MCF 10A (cell line): ENCODE measurements at regions of chr9 and their contacts with region 1.

Region 1: GRCh38 chr9:92501671-92502393 is 19.5 kb upstream of the ASPN start:
- DNase-seq: peak; percentile 68
- H3K4me3 Mint-ChIP-seq: peak overlapping the region; percentile 8
- H3K27ac Mint-ChIP-seq: peak overlapping the region; percentile 57
- H3K4me1 Mint-ChIP-seq: peaks cover 28% of the 10 kb centered on the region
- H3K27me3 Mint-ChIP-seq: no peaks in the 10 kb centered on the region
- CTCF ChIP-seq: peak; percentile 47

Region 2: DNA sequence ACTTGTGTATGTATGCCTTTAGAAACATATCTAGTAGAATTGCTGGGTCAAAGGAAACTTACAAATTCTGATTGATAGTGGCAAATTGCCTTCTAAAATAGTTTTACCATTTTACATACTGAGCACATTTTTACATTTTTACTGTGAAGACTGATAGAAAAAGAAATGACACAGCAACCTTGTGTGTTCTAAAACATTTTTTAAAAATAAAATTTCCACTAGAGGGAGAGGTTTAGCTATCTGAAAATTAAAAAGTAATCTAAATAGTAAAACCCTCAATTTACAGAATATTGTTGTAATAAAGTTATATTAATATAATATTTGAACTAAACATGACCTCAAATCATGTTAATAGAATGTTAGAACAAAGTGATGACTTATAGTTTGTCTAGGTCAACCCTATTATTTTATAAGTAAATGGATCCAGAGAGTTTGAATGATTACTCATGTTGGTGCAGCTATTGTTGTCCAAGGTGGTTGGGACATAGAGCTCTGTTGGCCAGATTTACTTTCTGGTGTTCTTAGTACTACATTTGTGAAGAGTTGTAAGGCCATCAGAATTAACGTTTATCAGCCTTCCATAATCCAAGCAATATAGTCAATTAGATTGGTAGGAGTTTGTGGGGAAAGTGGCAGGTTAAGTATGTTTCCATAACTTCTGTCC is 158.9 kb before region 1 on chr9:
- CTCF ChIA-PET with region 1: no interaction called
- POLR2A ChIA-PET with region 1: interaction called, 10 read pairs
- intact Hi-C with region 1: loop called (anchors 5 kb)
- DNase-seq: no peak
- H3K4me3 Mint-ChIP-seq: no peak overlapping the region
- H3K27ac Mint-ChIP-seq: peak overlapping the region; percentile 48
- H3K4me1 Mint-ChIP-seq: no peaks in the 10 kb centered on the region
- H3K27me3 Mint-ChIP-seq: no peaks in the 10 kb centered on the region
- CTCF ChIP-seq: peak; percentile 32

Region 3: GRCh38 chr9:92393686-92394085 is 108.1 kb before region 1 on chr9:
- CTCF ChIA-PET with region 1: no interaction called
- POLR2A ChIA-PET with region 1: no interaction called
- intact Hi-C with region 1: no loop called
- DNase-seq: no peak
- H3K4me3 Mint-ChIP-seq: peak overlapping the region; percentile 25
- H3K27ac Mint-ChIP-seq: peak overlapping the region; percentile 59
- H3K4me1 Mint-ChIP-seq: peaks cover 6% of the 10 kb centered on the region
- H3K27me3 Mint-ChIP-seq: no peaks in the 10 kb centered on the region
- CTCF ChIP-seq: no peak

Region 4: GRCh38 chr9:92438900-92439526 is 62.8 kb before region 1 on chr9:
- CTCF ChIA-PET with region 1: interaction called, 4 read pairs
- POLR2A ChIA-PET with region 1: interaction called, 9 read pairs
- intact Hi-C with region 1: loop called (anchors 1 kb)
- DNase-seq: peak; percentile 9
- H3K4me3 Mint-ChIP-seq: no peak overlapping the region
- H3K27ac Mint-ChIP-seq: peak overlapping the region; percentile 68
- H3K4me1 Mint-ChIP-seq: peaks cover 7% of the 10 kb centered on the region
- H3K27me3 Mint-ChIP-seq: no peaks in the 10 kb centered on the region
- CTCF ChIP-seq: peak; percentile 50

Region 5: DNA sequence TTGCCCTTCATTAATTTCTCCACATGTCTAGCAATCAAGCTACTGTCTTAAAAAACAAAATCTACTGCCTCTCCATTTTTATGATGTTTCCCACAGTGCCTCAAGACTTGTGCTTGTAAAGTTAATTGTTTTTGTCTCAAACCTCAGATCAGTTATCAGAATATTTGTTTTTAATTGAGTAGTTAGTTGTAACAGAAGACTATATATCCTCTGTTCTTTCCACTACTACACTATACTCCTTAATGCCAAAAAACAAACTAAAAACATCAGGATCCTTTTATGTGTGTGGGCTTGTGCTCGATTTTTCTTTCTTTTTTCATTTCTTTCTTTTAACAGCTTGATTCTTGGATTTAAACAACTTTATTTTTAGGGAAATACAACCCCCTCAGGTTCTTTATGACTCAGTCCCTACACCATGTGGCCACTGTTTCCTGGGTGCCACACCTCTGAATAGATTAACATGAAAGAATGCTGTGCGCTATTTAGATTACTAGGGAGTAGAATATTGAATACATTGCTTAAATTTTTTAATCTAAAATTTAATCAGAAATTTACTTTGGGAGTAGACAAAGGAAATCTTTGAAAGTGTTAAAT is 20.7 kb before region 1 on chr9:
- CTCF ChIA-PET with region 1: interaction called, 9 read pairs
- POLR2A ChIA-PET with region 1: interaction called, 28 read pairs
- intact Hi-C with region 1: no loop called
- DNase-seq: peak; percentile 59
- H3K4me3 Mint-ChIP-seq: peak overlapping the region; percentile 30
- H3K27ac Mint-ChIP-seq: peak overlapping the region; percentile 97
- H3K4me1 Mint-ChIP-seq: peaks cover 22% of the 10 kb centered on the region
- H3K27me3 Mint-ChIP-seq: no peaks in the 10 kb centered on the region
- CTCF ChIP-seq: no peak

Region 6: DNA sequence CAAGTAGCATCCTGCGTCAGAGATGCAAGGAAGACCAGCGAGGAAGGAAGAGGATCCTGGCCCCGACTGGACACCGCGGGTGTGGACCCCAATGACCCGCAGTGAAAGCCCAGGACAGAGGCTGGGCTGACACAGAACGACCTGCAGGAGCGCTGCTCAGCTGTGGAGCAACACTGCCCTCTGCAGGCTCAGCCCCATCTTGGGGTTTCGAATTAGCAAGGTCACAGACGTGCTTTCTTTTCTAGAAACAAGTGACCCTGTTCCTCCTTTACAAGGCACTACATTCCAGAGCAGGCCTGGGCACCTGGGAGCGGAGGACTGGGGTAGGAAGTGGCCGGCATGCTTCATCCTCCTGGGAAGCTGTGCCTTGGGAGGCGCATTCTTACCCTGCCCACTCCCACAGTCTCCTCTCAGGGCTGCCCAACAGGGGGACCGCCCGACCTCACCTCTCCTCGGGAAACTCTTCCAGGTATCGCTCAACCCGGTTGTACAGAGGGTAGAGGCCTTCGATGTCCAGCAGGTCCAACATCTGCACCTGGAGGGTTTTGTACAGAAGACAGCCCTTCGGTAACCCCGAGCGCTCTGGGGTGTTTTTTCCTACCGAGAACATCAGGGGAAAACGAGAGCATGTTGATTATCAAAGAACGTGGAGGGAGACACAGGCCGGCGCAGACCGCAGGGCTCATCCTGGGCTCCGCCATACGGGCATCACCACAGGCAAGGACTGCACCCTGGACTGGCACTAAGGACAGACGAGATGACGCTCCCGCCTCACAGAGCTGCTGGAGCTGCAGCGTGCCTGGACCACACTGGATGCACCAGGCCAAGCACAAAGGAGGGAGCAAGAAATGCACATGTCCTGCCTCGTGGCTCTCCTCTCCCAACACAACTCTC is 133.1 kb after region 1 on chr9:
- CTCF ChIA-PET with region 1: no interaction called
- POLR2A ChIA-PET with region 1: interaction called, 3 read pairs
- intact Hi-C with region 1: loop called (anchors 1 kb)
- DNase-seq: peak; percentile 67
- H3K4me3 Mint-ChIP-seq: no peak overlapping the region
- H3K27ac Mint-ChIP-seq: no peak overlapping the region
- H3K4me1 Mint-ChIP-seq: no peaks in the 10 kb centered on the region
- H3K27me3 Mint-ChIP-seq: no peaks in the 10 kb centered on the region
- CTCF ChIP-seq: peak; percentile 90

Region 7: DNA sequence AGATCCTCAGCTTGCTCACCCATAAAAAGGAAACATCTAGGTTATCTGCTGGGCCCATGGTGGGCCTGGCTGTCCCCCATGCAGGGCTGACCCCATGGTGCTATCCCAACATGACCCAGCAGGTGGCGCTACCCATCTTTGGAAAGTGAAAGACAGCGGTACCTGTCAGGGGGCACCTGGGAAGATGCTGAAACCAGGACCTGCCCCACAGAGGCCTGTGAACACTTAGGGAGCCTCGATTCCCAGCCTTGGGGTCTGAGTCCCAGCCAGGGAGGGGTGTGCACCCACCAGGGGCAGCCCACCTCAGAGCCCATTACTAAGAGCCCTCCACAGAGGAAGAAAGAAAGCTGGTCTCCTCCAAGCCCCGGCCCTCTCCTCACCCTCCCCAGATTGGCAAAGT is 214.7 kb after region 1 on chr9:
- CTCF ChIA-PET with region 1: no interaction called
- POLR2A ChIA-PET with region 1: no interaction called
- intact Hi-C with region 1: no loop called
- DNase-seq: peak; percentile 64
- H3K4me3 Mint-ChIP-seq: peak overlapping the region; percentile 11
- H3K27ac Mint-ChIP-seq: peak overlapping the region; percentile 77
- H3K4me1 Mint-ChIP-seq: peaks cover 7% of the 10 kb centered on the region
- H3K27me3 Mint-ChIP-seq: no peaks in the 10 kb centered on the region
- CTCF ChIP-seq: peak; percentile 87

Region 8: GRCh38 chr9:92790542-92791527 is 289.0 kb after region 1 on chr9:
- CTCF ChIA-PET with region 1: interaction called, 7 read pairs
- POLR2A ChIA-PET with region 1: no interaction called
- intact Hi-C with region 1: loop called (anchors 10 kb)
- DNase-seq: peak; percentile 81
- H3K4me3 Mint-ChIP-seq: no peak overlapping the region
- H3K27ac Mint-ChIP-seq: no peak overlapping the region
- H3K4me1 Mint-ChIP-seq: peaks cover 9% of the 10 kb centered on the region
- H3K27me3 Mint-ChIP-seq: no peaks in the 10 kb centered on the region
- CTCF ChIP-seq: peak; percentile 85